ENCODE measurements at regions of chr17 and their contacts with region 1.

Region 1: DNA sequence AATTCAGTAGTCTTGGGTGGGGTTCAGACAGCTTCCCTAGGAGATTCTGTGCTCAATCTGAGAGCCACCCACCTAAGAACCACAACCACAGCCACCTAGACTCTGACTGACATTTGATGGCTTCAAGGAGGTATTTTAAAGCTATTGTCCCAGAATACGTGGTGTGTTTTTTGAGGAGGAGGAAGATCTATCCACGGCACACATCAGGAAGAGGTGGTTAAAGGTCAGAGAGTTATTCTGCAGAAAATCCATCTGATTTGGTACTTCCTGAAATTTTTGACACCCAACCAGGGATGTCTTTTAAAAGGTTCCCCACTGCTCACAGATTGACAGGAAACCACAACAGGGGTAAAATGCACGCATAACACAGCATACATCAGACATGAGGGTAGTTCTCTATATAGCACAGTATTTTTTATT is 25.1 kb downstream of the SMARCE1 start:
- DNase-seq: peak; percentile 75
- H3K4me3 Mint-ChIP-seq: peak overlapping the region; percentile 5
- H3K27ac Mint-ChIP-seq: peak overlapping the region; percentile 31
- H3K4me1 Mint-ChIP-seq: peaks cover 47% of the 10 kb centered on the region
- H3K27me3 Mint-ChIP-seq: no peaks in the 10 kb centered on the region

Region 2: DNA sequence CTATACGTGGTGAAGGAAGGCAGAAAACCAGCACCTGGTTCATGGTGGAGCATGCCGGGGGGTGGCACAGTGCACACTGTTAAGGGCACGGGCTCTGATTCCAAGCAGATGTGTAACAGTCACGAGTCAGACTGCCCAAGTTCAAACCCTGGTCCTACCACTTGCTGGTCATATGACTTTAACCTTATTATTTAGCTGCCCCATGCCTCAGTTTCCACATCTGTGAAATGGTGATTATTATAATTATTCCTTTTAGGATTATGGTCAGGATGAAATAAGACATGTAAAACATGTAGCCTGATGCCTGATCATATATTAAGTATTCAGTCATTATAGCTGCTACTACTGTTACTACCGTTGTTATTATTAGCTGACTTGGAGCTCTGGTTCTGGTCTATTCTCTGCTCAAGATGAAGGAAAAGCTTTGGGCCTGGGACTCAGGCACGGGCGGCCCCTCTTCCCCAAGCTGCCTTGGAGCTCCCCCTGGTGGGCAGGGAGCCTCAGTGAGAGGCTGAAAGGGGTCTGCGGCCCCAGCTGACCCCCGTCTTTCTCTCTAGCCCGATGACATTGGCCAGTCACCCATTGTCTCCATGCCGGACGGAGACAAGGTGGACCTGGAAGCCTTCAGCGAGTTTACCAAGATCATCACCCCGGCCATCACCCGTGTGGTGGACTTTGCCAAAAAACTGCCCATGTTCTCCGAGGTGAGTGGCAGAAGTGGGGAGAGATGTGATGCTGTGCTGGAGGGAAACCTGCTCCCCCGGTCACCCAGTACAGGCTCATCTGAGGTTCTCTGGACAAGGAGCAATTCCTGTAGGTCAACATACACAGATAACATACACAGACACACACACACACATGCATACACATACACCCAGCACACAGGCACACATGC is 536.1 kb before region 1 on chr17:
- intact Hi-C with region 1: no loop called
- DNase-seq: peak; percentile 87
- H3K4me3 Mint-ChIP-seq: no peak overlapping the region
- H3K27ac Mint-ChIP-seq: no peak overlapping the region
- H3K4me1 Mint-ChIP-seq: peaks cover 4% of the 10 kb centered on the region
- H3K27me3 Mint-ChIP-seq: no peaks in the 10 kb centered on the region

Region 3: DNA sequence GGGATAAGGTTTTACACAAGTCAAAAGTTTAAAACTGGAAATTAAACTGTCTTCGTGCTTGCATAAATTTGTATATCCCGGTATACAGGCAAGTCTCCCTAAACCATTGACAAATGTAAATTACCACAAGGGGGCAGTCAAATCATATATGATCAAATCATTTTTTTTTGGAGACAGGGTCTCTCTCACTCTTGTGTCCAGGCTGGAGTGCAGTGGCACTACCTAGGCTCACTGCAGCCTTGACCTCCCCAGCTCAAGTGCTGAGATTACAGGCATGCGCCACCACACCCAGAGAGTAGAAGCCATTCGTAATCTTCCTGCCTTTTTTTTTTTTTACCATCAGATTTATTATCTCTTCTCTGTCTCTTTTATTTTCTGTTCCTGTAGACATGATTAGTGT is 223.3 kb before region 1 on chr17:
- intact Hi-C with region 1: no loop called
- DNase-seq: peak; percentile 65
- H3K4me3 Mint-ChIP-seq: no peak overlapping the region
- H3K27ac Mint-ChIP-seq: peak overlapping the region; percentile 59
- H3K4me1 Mint-ChIP-seq: peaks cover 27% of the 10 kb centered on the region
- H3K27me3 Mint-ChIP-seq: no peaks in the 10 kb centered on the region

Region 4: GRCh38 chr17:40551879-40552768 is 70.4 kb before region 1 on chr17:
- intact Hi-C with region 1: no loop called
- DNase-seq: no peak
- H3K4me3 Mint-ChIP-seq: no peak overlapping the region
- H3K27ac Mint-ChIP-seq: peak overlapping the region; percentile 71
- H3K4me1 Mint-ChIP-seq: peaks cover 87% of the 10 kb centered on the region
- H3K27me3 Mint-ChIP-seq: no peaks in the 10 kb centered on the region

Region 5: DNA sequence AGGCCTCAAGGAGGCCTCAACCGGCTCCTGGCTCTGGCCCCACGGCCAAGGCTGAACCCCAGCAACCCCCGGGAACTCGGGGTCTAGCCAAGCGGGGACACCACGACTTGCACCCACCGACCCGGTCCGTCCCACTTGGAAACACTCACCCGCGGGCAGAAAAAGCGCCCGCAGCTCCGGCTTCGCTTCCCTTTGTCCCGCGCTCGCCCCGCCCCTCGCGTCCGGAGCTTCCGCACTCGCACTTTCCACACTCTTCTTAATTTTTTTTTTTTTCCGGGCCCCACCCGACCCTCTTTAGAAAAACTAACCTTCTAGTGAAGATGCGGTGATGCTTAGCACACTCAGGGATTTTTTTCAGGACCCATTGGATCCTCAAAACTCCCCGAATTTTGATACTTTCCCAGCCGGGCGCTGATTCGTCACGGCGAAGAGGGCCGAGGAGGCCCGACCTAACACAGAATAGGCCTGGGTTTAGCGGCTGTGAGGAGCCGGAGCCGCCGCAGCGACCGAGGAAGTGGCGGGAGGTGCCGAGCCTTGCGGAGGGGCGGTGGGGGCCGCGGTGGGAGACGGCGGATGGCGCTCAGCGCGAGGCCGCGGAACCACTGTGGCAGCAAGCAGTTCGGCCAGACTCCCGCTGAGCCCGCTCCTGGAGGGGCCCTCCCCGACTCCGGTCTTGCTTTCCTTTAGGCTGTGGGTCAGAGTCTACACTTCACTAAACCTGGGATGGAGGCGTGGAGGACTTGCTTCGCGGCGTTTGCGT is 25.3 kb after region 1 on chr17 and contains the start of gene SMARCE1:
- intact Hi-C with region 1: loop called (anchors 2 kb)
- DNase-seq: peak; percentile 92
- H3K4me3 Mint-ChIP-seq: peak within 1 kb of the TSS; percentile 93
- H3K27ac Mint-ChIP-seq: peak within 1 kb of the TSS; percentile 95
- H3K4me1 Mint-ChIP-seq: peaks cover 30% of the 10 kb centered on the region
- H3K27me3 Mint-ChIP-seq: no peaks in the 10 kb centered on the region
- total RNA-seq, gene SMARCE1: 122 and 125 TPM in 2 replicates

Region 6: DNA sequence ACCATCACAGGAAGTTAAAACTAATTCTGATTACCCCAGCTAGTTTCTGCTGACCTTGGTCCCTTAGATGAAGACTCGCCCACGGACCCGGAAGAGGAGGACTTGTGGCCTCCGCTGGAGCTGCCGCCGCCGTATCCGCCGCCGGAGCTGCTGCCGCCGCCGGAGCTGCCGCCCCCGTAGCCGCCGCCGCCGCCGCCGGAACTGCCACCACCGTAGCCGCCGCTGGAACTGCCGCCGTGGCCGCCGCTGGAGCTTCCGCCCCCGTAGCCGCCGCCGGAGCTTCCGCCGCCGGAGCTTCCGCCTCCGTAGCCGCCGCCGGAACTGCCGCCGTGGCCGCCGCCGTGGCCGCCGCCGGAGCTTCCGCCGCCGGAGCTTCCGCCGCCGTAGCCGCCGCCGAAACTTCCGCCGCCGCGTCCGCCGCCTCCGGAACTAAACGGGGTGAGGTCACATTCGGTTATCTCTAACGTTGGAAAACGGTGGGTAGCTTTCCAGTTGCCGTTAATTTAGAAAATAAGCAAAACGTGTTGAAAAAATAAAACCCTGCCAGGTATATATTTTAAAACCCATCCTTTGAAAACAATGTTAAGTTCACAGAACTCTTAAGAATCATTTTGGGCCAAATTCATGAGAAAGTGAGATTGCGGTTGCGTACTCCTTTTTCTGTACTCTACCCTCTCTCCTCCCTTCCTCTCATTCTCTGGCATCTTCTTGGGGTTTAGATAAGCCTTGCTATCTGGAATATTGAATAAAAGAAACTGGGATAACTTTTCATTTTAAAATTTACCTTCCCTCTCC is 196.4 kb after region 1 on chr17:
- intact Hi-C with region 1: loop called (anchors 5 kb)
- DNase-seq: peak; percentile 96
- H3K4me3 Mint-ChIP-seq: peak overlapping the region; percentile 89
- H3K27ac Mint-ChIP-seq: peak overlapping the region; percentile 89
- H3K4me1 Mint-ChIP-seq: peaks cover 12% of the 10 kb centered on the region
- H3K27me3 Mint-ChIP-seq: peaks cover 15% of the 10 kb centered on the region

Measured in activated CD4-positive, alpha-beta T cell treated with anti-CD3 and anti-CD28 coated beads, Interleukin-2, amount 10 ng/mL, durations not matched to agents 24 days and 14 days (primary cell).